ENCODE measurements at regions of chr9 and their contacts with region 1.

Region 1: GRCh38 chr9:132800038-132800648 is 77.9 kb downstream of the AK8 start:
- DNase-seq: peak; percentile 78
- H3K4me3 Mint-ChIP-seq: no peak overlapping the region
- H3K27ac Mint-ChIP-seq: no peak overlapping the region
- H3K4me1 Mint-ChIP-seq: no peaks in the 10 kb centered on the region
- H3K27me3 Mint-ChIP-seq: peaks cover 11% of the 10 kb centered on the region
- CTCF ChIP-seq: peak; percentile 89

Region 2: GRCh38 chr9:132411091-132411508 is 389.0 kb before region 1 on chr9:
- CTCF ChIA-PET with region 1: interaction called, 4 read pairs
- POLR2A ChIA-PET with region 1: no interaction called
- intact Hi-C with region 1: loop called (anchors 1 kb)
- DNase-seq: peak; percentile 64
- H3K4me3 Mint-ChIP-seq: peak overlapping the region; percentile 46
- H3K27ac Mint-ChIP-seq: no peak overlapping the region
- H3K4me1 Mint-ChIP-seq: peaks cover 12% of the 10 kb centered on the region
- H3K27me3 Mint-ChIP-seq: peaks cover 37% of the 10 kb centered on the region
- CTCF ChIP-seq: peak; percentile 77

Region 3: DNA sequence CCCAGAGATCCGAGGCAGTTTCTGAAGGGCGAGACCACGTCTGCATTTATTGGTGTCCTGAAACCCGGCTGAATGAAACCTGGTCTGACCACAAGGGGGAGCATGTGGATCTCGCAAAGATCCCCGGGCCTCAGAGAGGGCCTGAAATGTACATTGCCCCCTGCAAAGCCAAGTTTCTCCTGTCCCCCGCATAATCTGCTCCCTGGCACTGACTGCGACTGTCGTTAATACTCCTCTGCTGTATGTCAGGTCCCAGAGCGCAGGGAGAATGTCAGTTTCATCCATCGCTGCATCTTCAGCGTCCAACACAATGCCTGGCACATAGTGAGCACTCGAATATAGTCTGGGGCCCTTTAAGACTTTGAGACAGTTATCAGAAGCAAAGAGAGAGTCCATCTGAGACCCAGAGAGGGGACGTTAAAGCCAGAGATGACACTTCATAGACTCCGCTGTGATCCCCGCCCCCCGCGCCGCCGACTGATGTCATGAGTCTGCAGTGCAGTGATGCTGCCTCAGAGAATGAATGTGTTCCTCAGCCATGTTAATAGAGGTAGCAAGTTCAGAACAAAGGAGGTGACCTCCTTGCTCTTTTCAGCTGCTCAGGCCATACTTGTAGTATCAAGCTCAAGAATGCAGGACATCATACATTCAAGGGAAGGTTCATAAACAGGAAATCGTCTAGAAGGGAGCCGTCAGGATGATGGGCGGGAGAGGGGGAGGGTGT is 292.2 kb before region 1 on chr9:
- CTCF ChIA-PET with region 1: interaction called, 12 read pairs
- POLR2A ChIA-PET with region 1: interaction called, 3 read pairs
- intact Hi-C with region 1: no loop called
- DNase-seq: peak; percentile 65
- H3K4me3 Mint-ChIP-seq: no peak overlapping the region
- H3K27ac Mint-ChIP-seq: no peak overlapping the region
- H3K4me1 Mint-ChIP-seq: no peaks in the 10 kb centered on the region
- H3K27me3 Mint-ChIP-seq: peaks cover 62% of the 10 kb centered on the region
- CTCF ChIP-seq: peak; percentile 73

Region 4: GRCh38 chr9:132651254-132651653 is 148.9 kb before region 1 on chr9:
- CTCF ChIA-PET with region 1: interaction called, 7 read pairs
- POLR2A ChIA-PET with region 1: interaction called, 3 read pairs
- intact Hi-C with region 1: loop called (anchors 1 kb)
- DNase-seq: peak; percentile 86
- H3K4me3 Mint-ChIP-seq: peak overlapping the region; percentile 16
- H3K27ac Mint-ChIP-seq: no peak overlapping the region
- H3K4me1 Mint-ChIP-seq: peaks cover 7% of the 10 kb centered on the region
- H3K27me3 Mint-ChIP-seq: no peaks in the 10 kb centered on the region
- CTCF ChIP-seq: peak; percentile 42

Region 5: GRCh38 chr9:132669698-132670456 is 130.3 kb before region 1 on chr9 and contains the start of gene DDX31:
- CTCF ChIA-PET with region 1: interaction called, 4 read pairs
- POLR2A ChIA-PET with region 1: interaction called, 5 read pairs
- intact Hi-C with region 1: loop called (anchors 5 kb)
- DNase-seq: peak; percentile 75
- H3K4me3 Mint-ChIP-seq: peak within 1 kb of the TSS; percentile 95
- H3K27ac Mint-ChIP-seq: peak within 1 kb of the TSS; percentile 91
- H3K4me1 Mint-ChIP-seq: peaks cover 22% of the 10 kb centered on the region
- H3K27me3 Mint-ChIP-seq: no peaks in the 10 kb centered on the region
- CTCF ChIP-seq: no peak
- total RNA-seq, gene DDX31: 28.5 and 28.8 TPM in 2 replicates

Region 6: DNA sequence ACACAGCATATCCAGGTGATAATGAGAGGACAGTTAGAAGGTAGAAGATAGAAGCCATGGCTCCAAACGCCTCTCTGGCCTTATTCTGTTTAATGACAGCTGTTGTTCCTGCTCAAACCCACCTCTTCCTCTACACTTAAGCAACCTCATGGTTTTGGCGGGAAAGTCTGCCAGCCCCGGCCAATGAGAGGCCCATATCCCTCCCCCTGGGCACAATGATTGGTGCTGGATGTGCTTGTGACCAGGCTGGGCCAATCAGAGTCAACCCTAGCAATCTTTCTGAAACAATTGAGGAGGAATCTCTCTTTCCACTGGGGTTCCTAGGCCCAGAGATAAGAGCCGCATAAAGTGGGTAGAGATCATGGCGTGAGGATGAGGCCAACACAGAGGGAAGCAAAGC is 173.6 kb after region 1 on chr9:
- CTCF ChIA-PET with region 1: no interaction called
- POLR2A ChIA-PET with region 1: no interaction called
- intact Hi-C with region 1: loop called (anchors 5 kb)
- DNase-seq: peak; percentile 11
- H3K4me3 Mint-ChIP-seq: no peak overlapping the region
- H3K27ac Mint-ChIP-seq: no peak overlapping the region
- H3K4me1 Mint-ChIP-seq: peaks cover 5% of the 10 kb centered on the region
- H3K27me3 Mint-ChIP-seq: peaks cover 66% of the 10 kb centered on the region
- CTCF ChIP-seq: no peak